ENCODE measurements at regions of chr1 and their contacts with region 1.

Region 1: DNA sequence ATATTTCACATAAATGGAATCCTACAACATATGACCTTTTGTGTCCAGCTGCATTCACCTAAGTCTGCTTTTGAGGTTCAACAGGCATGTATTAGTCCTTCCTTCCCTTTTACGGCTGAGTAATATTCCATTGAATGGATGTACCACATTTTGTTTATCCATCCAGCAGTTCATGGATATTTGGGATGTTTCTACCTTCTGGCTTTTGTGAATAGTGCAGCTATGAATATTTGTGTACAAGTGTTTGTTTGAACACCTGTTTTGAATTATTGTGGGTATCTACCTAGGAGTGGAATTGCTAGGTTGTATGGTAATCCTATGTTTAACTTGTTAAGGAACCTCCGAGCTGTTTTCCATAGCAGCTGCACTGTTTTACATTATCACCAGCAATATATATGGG is 62.3 kb upstream of the DESI2 start:
- DNase-seq: no peak
- ATAC-seq: no peak
- H3K4me3 ChIP-seq: no peak overlapping the region
- H3K27ac ChIP-seq: no peak overlapping the region
- H3K4me1 ChIP-seq: no peaks in the 10 kb centered on the region
- H3K27me3 ChIP-seq: no peaks in the 10 kb centered on the region
- CTCF ChIP-seq: no peak

Region 2: GRCh38 chr1:243974451-243975292 is 616.0 kb before region 1 on chr1:
- intact Hi-C with region 1: no loop called
- DNase-seq: peak in 1 of 2 donors; percentile 11
- ATAC-seq: no peak
- H3K4me3 ChIP-seq: no peak overlapping the region
- H3K27ac ChIP-seq: no peak overlapping the region
- H3K4me1 ChIP-seq: peaks cover 0 to 4% (median 0%) of the 10 kb centered on the region in 9 donors
- H3K27me3 ChIP-seq: peaks cover 0 to 18% (median 0%) of the 10 kb centered on the region in 7 donors
- CTCF ChIP-seq: no peak

Region 3: GRCh38 chr1:244636488-244637259 is 46.0 kb after region 1 on chr1:
- intact Hi-C with region 1: loop called in 1 of 10 experiments (anchors 1 kb)
- DNase-seq: no peak
- ATAC-seq: no peak
- H3K4me3 ChIP-seq: no peak overlapping the region
- H3K27ac ChIP-seq: no peak overlapping the region
- H3K4me1 ChIP-seq: no peaks in the 10 kb centered on the region
- H3K27me3 ChIP-seq: peaks cover 0 to 3% (median 0%) of the 10 kb centered on the region in 7 donors
- CTCF ChIP-seq: no peak